Heart left ventricle (tissue), 16 donors: ENCODE measurements at regions of chr3 and their contacts with region 1.

Region 1: GRCh38 chr3:136042608-136043221 is 77.2 kb downstream of the PPP2R3A start:
- DNase-seq: no peak
- ATAC-seq: peak in 2 of 4 donors; percentile 47
- H3K4me3 ChIP-seq: no peak overlapping the region
- H3K27ac ChIP-seq: peak overlapping the region in 1 of 12 donors; percentile 19
- H3K4me1 ChIP-seq: peaks cover 0 to 28% (median 0%) of the 10 kb centered on the region in 12 donors
- H3K27me3 ChIP-seq: no peaks in the 10 kb centered on the region
- CTCF ChIP-seq: peak; percentile 36 to 72 (median 66)
- POLR2A ChIP-seq: no peak

Region 2: DNA sequence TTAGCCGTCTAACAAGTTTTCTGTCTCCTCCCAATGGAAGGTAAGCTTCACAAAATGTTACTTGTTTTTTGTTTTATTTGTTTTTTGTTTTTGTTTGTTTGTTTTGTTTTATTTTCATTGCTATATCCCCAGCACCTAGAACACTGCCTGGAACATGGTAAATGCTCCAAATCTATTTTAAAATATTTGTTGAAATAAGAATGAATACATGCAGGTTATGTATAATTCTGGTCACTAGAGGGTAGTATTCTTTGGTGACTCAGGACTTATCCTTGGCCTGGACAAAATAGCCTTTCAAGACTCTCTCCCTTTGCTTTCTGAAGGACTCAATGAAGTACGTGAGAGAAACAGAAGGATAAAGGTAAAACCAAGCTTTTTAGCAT is 124.1 kb before region 1 on chr3:
- intact Hi-C with region 1: loop called (anchors 1 to 2 kb)
- DNase-seq: no peak
- ATAC-seq: peak; percentile 47 to 77 (median 67)
- H3K4me3 ChIP-seq: no peak overlapping the region
- H3K27ac ChIP-seq: no peak overlapping the region
- H3K4me1 ChIP-seq: peaks cover 0 to 6% (median 0%) of the 10 kb centered on the region in 12 donors
- H3K27me3 ChIP-seq: no peaks in the 10 kb centered on the region
- CTCF ChIP-seq: peak; percentile 19 to 64 (median 46)
- POLR2A ChIP-seq: no peak